Dendritic cell treated with granulocyte-macrophage colony-stimulating factor and Interleukin-4, amounts not matched to agents 40 ng/mL and 50 ng/mL, for 4 days (primary cell): ENCODE measurements at regions of chr10 and their contacts with region 1.

Region 1: DNA sequence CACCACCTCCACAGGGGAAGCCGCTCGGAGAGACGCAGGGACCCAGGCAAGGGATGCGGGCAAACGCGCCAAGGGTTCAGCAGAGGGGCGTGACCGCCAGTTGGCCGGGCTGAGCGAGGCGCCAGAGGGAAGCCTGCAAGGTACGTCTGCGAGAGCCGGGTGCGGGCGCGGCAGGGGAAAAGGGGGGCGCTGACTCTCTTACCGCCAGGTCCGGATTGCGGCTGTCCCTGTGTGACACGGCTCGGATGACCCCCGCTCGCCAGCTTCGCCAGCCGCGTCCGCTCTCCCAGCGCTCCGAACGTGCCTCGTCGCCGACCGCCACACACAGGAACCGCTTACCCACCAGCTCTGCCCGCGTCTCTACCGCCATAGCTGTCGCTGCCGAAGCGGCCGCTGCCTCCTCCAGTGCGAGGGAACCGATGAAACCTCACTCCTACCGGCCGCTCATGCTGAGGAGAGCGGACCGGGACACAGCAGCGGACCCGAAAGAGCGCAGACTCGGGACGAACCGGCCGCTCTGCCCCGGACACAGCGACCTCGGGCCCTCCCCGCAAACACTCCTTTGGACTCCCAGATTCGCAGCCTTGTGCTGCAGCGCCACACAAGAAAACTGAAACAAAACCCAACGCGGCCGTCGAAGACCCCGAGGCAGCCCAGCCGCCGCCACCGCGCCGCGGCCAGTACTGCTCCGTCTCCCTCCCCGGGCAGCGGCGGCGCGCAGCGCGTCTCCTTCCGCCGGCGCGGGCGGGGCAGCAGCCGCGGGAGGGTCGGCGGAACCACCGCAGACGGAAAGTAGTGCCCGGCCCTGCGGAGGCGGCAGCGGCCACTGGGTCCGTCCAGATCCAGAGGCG is at the start of gene JMJD1C:
- H3K4me3 Mint-ChIP-seq: peak within 1 kb of the TSS; percentile 99
- H3K27ac Mint-ChIP-seq: peak within 1 kb of the TSS; percentile 95
- H3K4me1 Mint-ChIP-seq: peaks cover 27% of the 10 kb centered on the region
- H3K27me3 Mint-ChIP-seq: peaks cover 11% of the 10 kb centered on the region

Region 2: DNA sequence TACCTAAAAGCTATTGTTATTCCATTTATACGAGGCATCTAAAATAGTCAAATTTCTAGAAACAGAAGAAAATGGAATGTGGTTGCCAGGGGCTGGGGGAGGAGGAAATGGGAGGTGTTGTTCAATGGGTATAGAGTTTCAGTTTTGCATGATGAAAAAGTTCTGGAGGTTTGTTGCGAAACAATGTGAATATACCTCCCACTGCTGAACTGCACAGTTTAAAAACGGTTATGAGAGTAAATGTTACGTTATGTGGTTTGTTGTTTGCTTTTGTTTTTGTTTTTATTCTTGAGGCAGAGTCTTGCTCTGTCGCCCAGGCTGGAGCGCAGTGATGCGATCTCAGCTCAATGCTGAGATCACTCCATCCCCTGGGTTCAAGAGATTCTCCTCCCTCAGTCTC is 397.3 kb before region 1 on chr10:
- intact Hi-C with region 1: no loop called
- H3K4me3 Mint-ChIP-seq: no peak overlapping the region
- H3K27ac Mint-ChIP-seq: no peak overlapping the region
- H3K4me1 Mint-ChIP-seq: peaks cover 13% of the 10 kb centered on the region
- H3K27me3 Mint-ChIP-seq: peaks cover 14% of the 10 kb centered on the region

Region 3: DNA sequence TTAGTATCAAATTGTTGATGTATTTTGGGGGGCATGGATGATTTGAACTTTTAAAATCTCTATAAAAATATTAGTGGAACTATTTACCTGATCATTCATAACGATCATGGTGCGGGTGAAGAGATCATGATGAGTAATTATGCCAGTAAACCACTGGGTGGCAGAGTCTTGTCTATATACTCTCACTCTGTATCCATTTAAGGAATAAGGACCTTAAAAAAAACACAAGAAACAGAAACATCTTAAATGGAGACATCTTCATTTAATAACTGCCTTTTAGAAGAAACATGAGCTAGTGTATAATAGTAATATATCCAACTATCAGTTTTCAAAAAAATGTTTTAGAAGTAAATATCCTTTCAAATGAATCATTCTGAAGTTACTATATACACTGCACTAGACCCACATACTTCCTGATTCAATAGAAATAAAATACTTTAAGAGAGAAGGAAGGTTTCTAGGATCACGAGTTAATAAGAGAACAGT is 248.4 kb before region 1 on chr10:
- intact Hi-C with region 1: loop called (anchors 5 kb)
- H3K4me3 Mint-ChIP-seq: no peak overlapping the region
- H3K27ac Mint-ChIP-seq: no peak overlapping the region
- H3K4me1 Mint-ChIP-seq: peaks cover 47% of the 10 kb centered on the region
- H3K27me3 Mint-ChIP-seq: no peaks in the 10 kb centered on the region

Region 4: DNA sequence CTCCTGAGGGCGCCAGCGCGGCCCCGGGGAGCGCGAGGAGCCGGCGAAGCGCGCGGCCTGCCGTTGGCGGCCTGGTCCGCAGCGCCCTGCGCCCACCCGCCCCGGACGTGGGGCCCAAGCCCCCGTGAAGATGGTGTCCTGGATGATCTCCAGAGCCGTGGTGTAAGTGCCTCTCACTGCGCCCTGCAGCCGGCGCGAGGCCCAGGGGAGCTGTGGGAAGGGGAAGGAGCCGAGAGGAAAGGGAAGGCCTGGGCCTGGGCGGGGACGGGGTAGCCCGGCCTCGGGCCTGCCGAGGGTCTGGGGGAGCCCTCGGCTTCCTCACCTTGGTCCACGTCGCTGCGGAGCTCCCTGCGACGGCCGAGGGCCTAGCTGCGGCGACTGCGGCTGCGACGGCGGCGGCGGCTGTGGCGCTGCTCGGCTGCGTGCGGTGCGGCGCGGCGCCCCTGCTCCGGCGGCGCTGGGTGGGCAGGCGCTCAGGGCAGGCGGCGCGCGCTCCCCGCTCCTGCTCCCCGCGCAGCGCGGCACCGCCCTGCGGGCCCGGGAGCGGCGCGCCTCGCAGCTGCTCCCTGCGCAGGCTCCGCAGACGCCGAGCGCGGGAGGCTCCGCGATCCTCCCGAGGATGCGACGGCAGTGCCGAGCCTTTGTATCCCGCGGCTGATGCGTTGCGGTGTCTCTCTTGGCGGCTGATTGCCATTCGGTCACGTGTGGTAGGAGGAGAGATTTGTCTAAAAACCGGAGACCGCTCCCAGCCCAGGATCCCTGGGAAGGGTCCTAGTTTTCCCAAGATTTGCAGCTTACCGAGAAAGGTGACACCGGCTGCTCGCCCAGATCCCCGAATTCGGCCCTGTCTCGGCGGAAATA is 56.1 kb after region 1 on chr10:
- intact Hi-C with region 1: loop called (anchors 2 kb)
- H3K4me3 Mint-ChIP-seq: peak overlapping the region; percentile 81
- H3K27ac Mint-ChIP-seq: peak overlapping the region; percentile 81
- H3K4me1 Mint-ChIP-seq: peaks cover 40% of the 10 kb centered on the region
- H3K27me3 Mint-ChIP-seq: no peaks in the 10 kb centered on the region

Region 5: DNA sequence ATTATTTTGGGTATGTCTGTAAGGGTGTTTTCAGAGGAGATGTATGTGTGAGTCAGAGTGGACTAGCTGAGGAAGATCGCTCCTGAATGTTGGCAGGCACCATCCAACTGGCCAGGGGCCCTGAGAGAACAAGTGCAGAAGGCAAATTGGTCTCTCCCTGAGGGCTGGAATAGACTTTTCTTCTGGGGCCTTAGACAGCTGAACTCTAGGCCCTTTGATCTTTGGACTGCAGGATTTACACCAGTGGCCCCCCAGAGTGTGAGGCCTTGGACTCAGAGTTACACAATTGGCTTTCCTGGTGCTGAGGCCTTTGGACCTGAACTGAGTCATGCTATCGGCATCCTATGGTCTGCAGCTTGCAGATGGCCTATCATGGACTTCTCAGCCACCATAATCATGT is 272.9 kb after region 1 on chr10:
- intact Hi-C with region 1: no loop called
- H3K4me3 Mint-ChIP-seq: no peak overlapping the region
- H3K27ac Mint-ChIP-seq: no peak overlapping the region
- H3K4me1 Mint-ChIP-seq: peaks cover 5% of the 10 kb centered on the region
- H3K27me3 Mint-ChIP-seq: peaks cover 5% of the 10 kb centered on the region